ENCODE measurements at regions of chr1 and their contacts with region 1.

Region 1: GRCh38 chr1:206716870-206717673 is 32.4 kb downstream of the MAPKAPK2 start:
- DNase-seq: peak in 1 of 2 donors; percentile 53
- ATAC-seq: no peak
- H3K4me3 ChIP-seq: no peak overlapping the region
- H3K4me3 Mint-ChIP-seq: peak overlapping the region; percentile 84
- H3K27ac ChIP-seq: peak overlapping the region; percentile 65
- H3K27ac Mint-ChIP-seq: peak overlapping the region; percentile 92 to 94
- H3K4me1 ChIP-seq: peaks cover 79% of the 10 kb centered on the region
- H3K4me1 Mint-ChIP-seq: peaks cover 83 to 86% of the 10 kb centered on the region in 2 donors
- H3K27me3 ChIP-seq: no peaks in the 10 kb centered on the region
- H3K27me3 Mint-ChIP-seq: no peaks in the 10 kb centered on the region
- CTCF ChIP-seq: no peak

Region 2: DNA sequence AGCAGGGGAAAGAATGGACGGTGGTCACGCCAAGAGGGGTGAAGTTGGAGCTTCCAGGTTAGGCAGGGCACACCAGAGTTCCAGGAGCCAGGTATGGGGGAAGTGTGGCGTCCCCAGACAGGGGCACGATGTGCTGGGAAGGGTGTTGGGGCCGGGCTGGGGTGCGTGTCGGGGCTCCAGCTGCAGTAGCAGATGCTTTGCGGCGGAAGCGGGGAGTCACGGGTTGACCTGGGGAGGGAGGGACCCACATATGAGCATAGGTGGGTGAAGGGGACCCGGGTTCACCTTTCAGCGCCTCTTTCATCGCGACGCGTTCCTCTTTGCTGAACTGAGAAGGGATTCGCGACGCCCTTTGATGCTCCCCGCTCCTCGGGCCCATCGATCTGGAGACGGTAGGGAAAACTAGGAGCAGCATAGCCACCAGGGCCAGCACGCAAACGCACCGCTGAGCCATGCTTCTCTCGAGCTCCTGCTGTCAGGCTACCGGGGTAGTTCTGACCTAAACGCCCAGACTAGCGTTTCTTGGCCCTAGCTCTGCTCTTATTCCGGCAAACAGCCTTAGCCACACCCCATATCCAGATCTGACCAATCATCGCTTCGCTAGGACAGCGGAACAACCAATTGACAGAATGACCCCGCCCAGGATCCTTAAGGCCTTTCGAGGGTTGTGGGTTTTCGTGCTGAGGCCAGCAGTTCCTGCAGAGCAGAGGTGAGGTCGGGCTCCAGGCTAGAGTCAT is 867.3 kb before region 1 on chr1 and contains the start of gene PM20D1:
- intact Hi-C with region 1: no loop called
- DNase-seq: peak; percentile 75 to 92
- ATAC-seq: peak in 2 of 3 donors; percentile 95 to 98
- H3K4me3 ChIP-seq: peak within 1 kb of the TSS; percentile 47
- H3K4me3 Mint-ChIP-seq: no peak within 1 kb of the TSS
- H3K27ac ChIP-seq: peak within 1 kb of the TSS; percentile 69
- H3K27ac Mint-ChIP-seq: peak within 1 kb of the TSS in 1 of 2 donors; percentile 82
- H3K4me1 ChIP-seq: peaks cover 10% of the 10 kb centered on the region
- H3K4me1 Mint-ChIP-seq: peaks cover 0 to 13% of the 10 kb centered on the region in 2 donors
- H3K27me3 ChIP-seq: no peaks in the 10 kb centered on the region
- H3K27me3 Mint-ChIP-seq: peaks cover 0 to 3% of the 10 kb centered on the region in 2 donors
- CTCF ChIP-seq: no peak
- total RNA-seq, gene PM20D1: 1.1 to 1.6 TPM in 2 of 3 donors, not detected in the other

Region 3: DNA sequence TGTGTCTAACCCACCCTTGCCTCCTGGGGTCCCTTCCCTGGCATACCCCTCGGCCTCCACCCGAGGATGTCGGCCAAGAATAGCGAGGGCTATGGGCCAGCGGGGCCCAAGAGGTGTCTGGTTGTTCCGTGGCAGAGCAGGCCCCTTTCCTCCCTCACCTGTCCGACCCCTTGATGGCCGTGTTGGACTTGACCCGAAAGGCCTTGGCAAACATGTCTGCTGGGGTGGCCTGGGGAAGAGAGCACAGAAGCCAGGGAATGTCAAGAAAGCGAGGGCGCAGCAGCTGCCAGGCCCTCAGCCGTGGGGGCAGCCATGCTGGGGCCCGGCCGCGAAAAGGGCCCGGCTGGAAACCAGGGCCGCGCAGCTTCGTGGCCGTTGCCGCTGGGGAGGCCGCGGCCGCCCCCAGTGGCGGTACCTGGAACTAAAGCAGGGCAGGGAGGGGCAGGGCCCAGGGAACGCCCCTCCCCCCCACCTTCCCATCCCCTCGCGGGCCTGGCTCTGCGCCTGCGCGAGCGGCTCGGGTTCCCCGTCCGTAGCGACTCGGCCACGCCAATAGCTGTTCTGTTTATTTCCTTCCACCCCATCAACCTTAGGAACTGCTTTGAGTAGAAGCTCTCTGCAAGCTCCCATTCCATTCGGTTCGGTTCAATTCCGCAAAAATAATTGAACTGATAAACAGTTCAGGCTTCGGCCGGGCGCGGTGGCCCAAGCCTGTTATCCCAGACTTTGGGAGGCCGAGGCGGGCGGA is 104.8 kb before region 1 on chr1 and contains the start of gene EIF2D:
- intact Hi-C with region 1: no loop called
- DNase-seq: peak; percentile 95 to 97
- ATAC-seq: peak; percentile 99 to 100 (median 99)
- H3K4me3 ChIP-seq: peak within 1 kb of the TSS; percentile 73
- H3K4me3 Mint-ChIP-seq: peak within 1 kb of the TSS; percentile 93
- H3K27ac ChIP-seq: peak within 1 kb of the TSS; percentile 71
- H3K27ac Mint-ChIP-seq: peak within 1 kb of the TSS; percentile 90 to 96
- H3K4me1 ChIP-seq: peaks cover 10% of the 10 kb centered on the region
- H3K4me1 Mint-ChIP-seq: peaks cover 16 to 19% of the 10 kb centered on the region in 2 donors
- H3K27me3 ChIP-seq: no peaks in the 10 kb centered on the region
- H3K27me3 Mint-ChIP-seq: no peaks in the 10 kb centered on the region
- CTCF ChIP-seq: peak; percentile 93
- total RNA-seq, gene EIF2D: 31.8 to 34.6 (median 32.7) TPM

Region 4: GRCh38 chr1:206684478-206685333 is 32.4 kb before region 1 on chr1 and contains the start of gene MAPKAPK2:
- intact Hi-C with region 1: loop called (anchors 2 kb)
- DNase-seq: peak; percentile 75 to 88
- ATAC-seq: peak; percentile 74 to 86 (median 81)
- H3K4me3 ChIP-seq: peak within 1 kb of the TSS; percentile 92
- H3K4me3 Mint-ChIP-seq: peak within 1 kb of the TSS; percentile 89
- H3K27ac ChIP-seq: peak within 1 kb of the TSS; percentile 83
- H3K27ac Mint-ChIP-seq: peak within 1 kb of the TSS; percentile 96
- H3K4me1 ChIP-seq: peaks cover 47% of the 10 kb centered on the region
- H3K4me1 Mint-ChIP-seq: peaks cover 34 to 49% of the 10 kb centered on the region in 2 donors
- H3K27me3 ChIP-seq: no peaks in the 10 kb centered on the region
- H3K27me3 Mint-ChIP-seq: no peaks in the 10 kb centered on the region
- CTCF ChIP-seq: no peak
- total RNA-seq, gene MAPKAPK2: 137 to 197 (median 178) TPM

Region 5: DNA sequence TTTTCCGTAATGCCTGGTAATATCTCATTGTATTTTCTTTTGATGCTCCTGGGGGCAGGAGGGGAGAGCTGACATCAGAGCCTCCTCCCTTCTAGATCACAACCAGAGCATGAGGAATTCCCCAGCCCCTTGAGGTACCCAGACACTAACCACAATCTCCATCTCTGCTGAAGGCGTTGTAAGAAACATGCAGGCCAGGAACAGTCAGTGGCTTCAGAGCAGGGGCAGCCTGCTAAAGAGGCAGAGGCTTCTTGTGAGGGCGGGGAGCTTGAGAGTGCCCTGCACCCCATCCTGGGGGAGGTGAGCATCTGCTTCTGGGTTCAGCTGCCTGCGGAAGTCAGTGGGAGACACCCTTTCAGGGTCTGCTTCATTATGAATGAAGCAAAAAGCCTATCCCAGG is 13.4 kb before region 1 on chr1:
- intact Hi-C with region 1: loop called (anchors 2 kb)
- DNase-seq: peak; percentile 39 to 90
- ATAC-seq: peak; percentile 80 to 82 (median 82)
- H3K4me3 ChIP-seq: no peak overlapping the region
- H3K4me3 Mint-ChIP-seq: peak overlapping the region; percentile 74
- H3K27ac ChIP-seq: peak overlapping the region; percentile 51
- H3K27ac Mint-ChIP-seq: peak overlapping the region; percentile 76 to 90
- H3K4me1 ChIP-seq: peaks cover 75% of the 10 kb centered on the region
- H3K4me1 Mint-ChIP-seq: peaks cover 82 to 90% of the 10 kb centered on the region in 2 donors
- H3K27me3 ChIP-seq: no peaks in the 10 kb centered on the region
- H3K27me3 Mint-ChIP-seq: no peaks in the 10 kb centered on the region
- CTCF ChIP-seq: no peak

Region 6: DNA sequence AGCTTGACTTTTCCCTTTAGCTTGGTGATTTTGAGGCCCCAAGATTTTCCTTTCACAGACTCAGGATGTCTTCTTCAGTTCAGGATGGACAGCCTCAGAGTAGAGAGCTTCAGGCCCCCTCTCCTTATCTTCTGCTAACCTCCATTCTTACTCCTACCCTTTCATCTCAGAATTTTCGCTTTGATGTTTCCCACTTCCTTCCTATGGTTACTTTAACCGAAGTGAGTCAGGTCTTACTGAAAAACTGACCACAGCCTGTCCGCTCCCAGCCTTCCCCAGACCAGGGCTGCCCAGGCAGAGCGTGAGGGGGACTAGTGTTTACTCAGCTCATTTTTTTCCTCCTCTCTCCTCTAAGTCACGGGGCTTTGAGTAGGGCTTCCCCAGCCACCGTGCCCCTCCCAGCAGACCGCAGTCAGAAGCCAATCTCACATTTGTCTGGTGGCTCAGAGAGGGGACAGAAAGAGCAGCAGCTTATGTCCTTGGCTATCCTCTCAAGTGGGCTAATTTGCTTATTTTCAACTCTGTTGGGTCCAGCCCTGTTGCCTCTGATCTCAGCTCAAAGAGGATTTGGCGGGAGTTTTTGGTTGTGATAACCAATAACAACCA is 49.3 kb after region 1 on chr1:
- intact Hi-C with region 1: no loop called
- DNase-seq: peak; percentile 66 to 88
- ATAC-seq: peak; percentile 71 to 79 (median 79)
- H3K4me3 ChIP-seq: no peak overlapping the region
- H3K4me3 Mint-ChIP-seq: peak overlapping the region; percentile 62
- H3K27ac ChIP-seq: no peak overlapping the region
- H3K27ac Mint-ChIP-seq: peak overlapping the region; percentile 29 to 90
- H3K4me1 ChIP-seq: peaks cover 58% of the 10 kb centered on the region
- H3K4me1 Mint-ChIP-seq: peaks cover 47 to 53% of the 10 kb centered on the region in 2 donors
- H3K27me3 ChIP-seq: peaks cover 6% of the 10 kb centered on the region
- H3K27me3 Mint-ChIP-seq: peaks cover 14% of the 10 kb centered on the region in 2 donors
- CTCF ChIP-seq: no peak

Region 7: GRCh38 chr1:206925106-206925736 is 208.1 kb after region 1 on chr1:
- intact Hi-C with region 1: loop called (anchors 5 kb)
- DNase-seq: peak; percentile 80 to 84
- ATAC-seq: peak; percentile 68 to 86 (median 85)
- H3K4me3 ChIP-seq: no peak overlapping the region
- H3K4me3 Mint-ChIP-seq: no peak overlapping the region
- H3K27ac ChIP-seq: peak overlapping the region; percentile 93
- H3K27ac Mint-ChIP-seq: no peak overlapping the region
- H3K4me1 ChIP-seq: peaks cover 78% of the 10 kb centered on the region
- H3K4me1 Mint-ChIP-seq: peaks cover 9 to 17% of the 10 kb centered on the region in 2 donors
- H3K27me3 ChIP-seq: no peaks in the 10 kb centered on the region
- H3K27me3 Mint-ChIP-seq: no peaks in the 10 kb centered on the region
- CTCF ChIP-seq: no peak

Measured in natural killer cell (primary cell).